HepG2 (cell line): ENCODE measurements at regions of chr7 and their contacts with region 1.

Region 1: DNA sequence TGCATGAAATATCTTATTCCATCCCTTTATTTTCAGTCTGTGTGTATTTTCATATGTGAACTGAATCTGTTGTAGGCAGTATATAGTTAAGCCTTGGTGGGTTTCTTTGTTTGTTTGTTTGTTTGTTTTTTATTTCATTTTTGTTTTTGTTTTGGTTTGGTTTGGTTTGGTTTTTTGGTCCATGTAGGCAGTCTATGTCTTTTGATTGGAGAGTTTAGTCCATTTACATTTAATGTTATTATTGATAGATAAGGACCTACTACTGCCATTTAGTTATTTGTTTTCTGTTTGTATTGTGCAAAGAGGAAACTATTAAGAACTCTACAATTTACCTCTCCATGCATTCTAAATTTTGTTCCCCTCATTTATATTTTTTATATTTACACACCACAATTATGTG is 695.9 kb upstream of the GRM3 start:
- DNase-seq: no peak
- ATAC-seq: no peak
- H3K4me3 ChIP-seq: no peak overlapping the region
- H3K27ac ChIP-seq: no peak overlapping the region
- H3K4me1 ChIP-seq: peaks cover 11% of the 10 kb centered on the region; the same call in 1 of the 2 replicates
- H3K27me3 ChIP-seq: no peaks in the 10 kb centered on the region
- CTCF ChIP-seq: no peak
- EP300 ChIP-seq: no peak
- POLR2A ChIP-seq: no peak
- RAD21 ChIP-seq: no peak

Region 2: GRCh38 chr7:85914437-85914836 is 33.3 kb before region 1 on chr7:
- CTCF ChIA-PET with region 1: no interaction called
- POLR2A ChIA-PET with region 1: no interaction called
- in situ Hi-C with region 1: no loop called
- intact Hi-C with region 1: loop called (anchors 1 kb)
- DNase-seq: no peak
- ATAC-seq: no peak
- H3K4me3 ChIP-seq: no peak overlapping the region
- H3K27ac ChIP-seq: no peak overlapping the region
- H3K4me1 ChIP-seq: no peaks in the 10 kb centered on the region
- H3K27me3 ChIP-seq: no peaks in the 10 kb centered on the region
- CTCF ChIP-seq: no peak
- EP300 ChIP-seq: no peak
- POLR2A ChIP-seq: no peak
- RAD21 ChIP-seq: no peak

Region 3: GRCh38 chr7:86058649-86059048 is 110.9 kb after region 1 on chr7:
- CTCF ChIA-PET with region 1: no interaction called
- POLR2A ChIA-PET with region 1: no interaction called
- in situ Hi-C with region 1: no loop called
- intact Hi-C with region 1: no loop called
- DNase-seq: no peak
- ATAC-seq: no peak
- H3K4me3 ChIP-seq: no peak overlapping the region
- H3K27ac ChIP-seq: no peak overlapping the region
- H3K4me1 ChIP-seq: no peaks in the 10 kb centered on the region
- H3K27me3 ChIP-seq: no peaks in the 10 kb centered on the region
- CTCF ChIP-seq: no peak
- EP300 ChIP-seq: no peak
- POLR2A ChIP-seq: no peak
- RAD21 ChIP-seq: no peak